CD8-positive, alpha-beta memory T cell (primary cell): ENCODE measurements at regions of chr3 and their contacts with region 1.

Region 1: DNA sequence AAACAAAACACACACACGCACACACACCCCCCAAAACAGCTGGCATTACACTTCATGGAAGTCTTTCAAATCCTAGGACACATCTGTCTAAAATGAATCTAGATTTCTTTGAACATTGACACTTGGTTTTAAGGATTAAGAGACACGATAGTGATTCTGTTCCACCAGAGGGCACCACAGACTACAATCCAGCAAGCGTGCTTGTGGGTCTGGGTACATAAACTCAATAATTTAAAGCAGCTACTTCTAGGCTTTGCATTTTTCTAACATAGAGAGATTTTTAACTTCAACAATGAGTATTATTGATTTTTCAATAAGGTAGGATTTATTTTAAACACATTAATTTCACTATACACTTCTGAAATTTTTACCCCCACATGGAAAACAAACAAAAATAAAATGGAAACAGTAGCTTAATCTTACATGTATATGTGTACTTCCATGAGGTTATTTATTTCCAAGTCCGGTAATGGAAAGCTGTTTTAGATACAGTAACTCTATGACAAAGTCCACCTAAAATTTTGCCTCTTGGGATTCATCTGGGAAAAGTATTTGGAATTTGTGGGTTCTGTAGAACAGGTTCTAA is 564.0 kb upstream of the TGFBR2 start:
- DNase-seq: peak; percentile 7 to 53 (median 26)
- H3K4me3 ChIP-seq: no peak overlapping the region
- H3K4me3 Mint-ChIP-seq: no peak overlapping the region
- H3K27ac ChIP-seq: no peak overlapping the region
- H3K27ac Mint-ChIP-seq: no peak overlapping the region
- H3K4me1 ChIP-seq: no peaks in the 10 kb centered on the region
- H3K4me1 Mint-ChIP-seq: no peaks in the 10 kb centered on the region
- H3K27me3 ChIP-seq: no peaks in the 10 kb centered on the region
- H3K27me3 Mint-ChIP-seq: peaks cover 13 to 38% of the 10 kb centered on the region in 2 donors

Region 2: GRCh38 chr3:30059240-30059639 is 16.9 kb after region 1 on chr3:
- CTCF ChIA-PET with region 1: no interaction called
- POLR2A ChIA-PET with region 1: no interaction called
- DNase-seq: no peak
- H3K4me3 ChIP-seq: no peak overlapping the region
- H3K4me3 Mint-ChIP-seq: no peak overlapping the region
- H3K27ac ChIP-seq: no peak overlapping the region
- H3K27ac Mint-ChIP-seq: no peak overlapping the region
- H3K4me1 ChIP-seq: no peaks in the 10 kb centered on the region
- H3K4me1 Mint-ChIP-seq: no peaks in the 10 kb centered on the region
- H3K27me3 ChIP-seq: no peaks in the 10 kb centered on the region
- H3K27me3 Mint-ChIP-seq: peaks cover 2% of the 10 kb centered on the region in 2 donors

Region 3: GRCh38 chr3:30199096-30199759 is 156.9 kb after region 1 on chr3:
- CTCF ChIA-PET with region 1: interaction called, 12 read pairs
- POLR2A ChIA-PET with region 1: no interaction called
- DNase-seq: peak; percentile 18 to 63 (median 45)
- H3K4me3 ChIP-seq: no peak overlapping the region
- H3K4me3 Mint-ChIP-seq: no peak overlapping the region
- H3K27ac ChIP-seq: no peak overlapping the region
- H3K27ac Mint-ChIP-seq: no peak overlapping the region
- H3K4me1 ChIP-seq: no peaks in the 10 kb centered on the region
- H3K4me1 Mint-ChIP-seq: no peaks in the 10 kb centered on the region
- H3K27me3 ChIP-seq: no peaks in the 10 kb centered on the region
- H3K27me3 Mint-ChIP-seq: peaks cover 0 to 3% of the 10 kb centered on the region in 2 donors